ENCODE measurements at regions of chr3 and their contacts with region 1.

Region 1: GRCh38 chr3:156865732-156866131 is 39.6 kb downstream of the LEKR1 start:
- DNase-seq: peak; percentile 32
- ATAC-seq: peak; percentile 25
- H3K4me3 ChIP-seq: no peak overlapping the region
- H3K27ac ChIP-seq: peak overlapping the region; percentile 29
- H3K4me1 ChIP-seq: peaks cover 38% of the 10 kb centered on the region
- H3K27me3 ChIP-seq: no peaks in the 10 kb centered on the region
- CTCF ChIP-seq: 0 out of 2 replicates have a peak, but pooled peaks have one; percentile 12

Region 2: DNA sequence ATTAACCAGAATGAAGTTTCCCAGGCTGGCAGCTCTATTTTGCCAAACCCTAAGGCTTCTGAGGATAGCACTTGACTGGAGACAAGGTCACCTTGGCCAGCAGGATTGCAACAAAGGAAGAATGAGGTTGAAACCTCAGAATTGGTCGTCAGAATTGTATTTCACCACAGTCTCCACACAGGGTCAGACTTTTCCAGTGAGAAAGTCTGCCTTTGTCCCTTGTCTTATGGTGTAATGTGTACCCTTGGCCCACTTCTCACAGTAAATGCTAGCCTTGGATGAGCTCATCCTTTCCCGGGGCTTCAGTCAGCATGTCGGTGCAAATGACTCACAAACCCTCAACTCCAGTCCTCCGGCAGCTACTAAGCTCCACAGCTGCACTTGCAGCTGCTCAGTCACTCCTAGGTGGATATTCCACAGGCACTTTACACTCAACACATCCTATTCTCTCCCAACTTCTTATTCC is 330.5 kb before region 1 on chr3:
- CTCF ChIA-PET with region 1: no interaction called
- POLR2A ChIA-PET with region 1: no interaction called
- intact Hi-C with region 1: loop called (anchors 5 kb)
- DNase-seq: peak; percentile 97
- ATAC-seq: peak; percentile 95
- H3K4me3 ChIP-seq: no peak overlapping the region
- H3K27ac ChIP-seq: peak overlapping the region; percentile 79
- H3K4me1 ChIP-seq: peaks cover 28% of the 10 kb centered on the region
- H3K27me3 ChIP-seq: no peaks in the 10 kb centered on the region
- CTCF ChIP-seq: peak; percentile 71

Region 3: GRCh38 chr3:156691920-156692319 is 173.8 kb before region 1 on chr3:
- CTCF ChIA-PET with region 1: no interaction called
- POLR2A ChIA-PET with region 1: no interaction called
- intact Hi-C with region 1: loop called (anchors 5 kb)
- DNase-seq: peak; percentile 67
- ATAC-seq: peak; percentile 40
- H3K4me3 ChIP-seq: peak overlapping the region; percentile 1; the same call in 1 of the 2 replicates
- H3K27ac ChIP-seq: peak overlapping the region; percentile 61
- H3K4me1 ChIP-seq: peaks cover 61% of the 10 kb centered on the region
- H3K27me3 ChIP-seq: no peaks in the 10 kb centered on the region
- CTCF ChIP-seq: no peak

Region 4: DNA sequence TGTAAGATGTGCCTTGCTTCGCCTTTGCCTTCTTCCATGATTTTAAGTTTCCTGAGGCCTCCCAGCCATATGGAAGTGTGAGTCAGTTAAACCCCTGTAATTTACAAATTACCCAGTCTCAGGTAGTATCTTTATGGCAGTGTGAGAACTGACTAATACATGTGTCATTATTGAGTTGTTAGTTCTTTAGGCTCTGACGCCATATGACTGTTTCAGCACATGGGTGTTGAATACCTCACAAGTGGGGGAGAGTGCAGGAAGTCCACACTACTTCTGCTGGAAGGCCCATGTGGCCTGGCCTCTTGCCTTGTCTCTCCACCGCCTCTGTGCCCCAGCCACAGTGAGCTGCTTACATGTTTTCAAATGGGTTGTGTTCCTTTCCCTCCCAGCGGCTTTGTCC is 1964.7 kb after region 1 on chr3:
- CTCF ChIA-PET with region 1: no interaction called
- POLR2A ChIA-PET with region 1: no interaction called
- intact Hi-C with region 1: no loop called
- DNase-seq: peak; percentile 69
- ATAC-seq: peak; percentile 81
- H3K4me3 ChIP-seq: no peak overlapping the region
- H3K27ac ChIP-seq: peak overlapping the region; percentile 83
- H3K4me1 ChIP-seq: peaks cover 8% of the 10 kb centered on the region; the same call in 1 of the 2 replicates
- H3K27me3 ChIP-seq: no peaks in the 10 kb centered on the region
- CTCF ChIP-seq: no peak